MCF 10A (cell line): ENCODE measurements at regions of chr14 and their contacts with region 1.

Region 1: DNA sequence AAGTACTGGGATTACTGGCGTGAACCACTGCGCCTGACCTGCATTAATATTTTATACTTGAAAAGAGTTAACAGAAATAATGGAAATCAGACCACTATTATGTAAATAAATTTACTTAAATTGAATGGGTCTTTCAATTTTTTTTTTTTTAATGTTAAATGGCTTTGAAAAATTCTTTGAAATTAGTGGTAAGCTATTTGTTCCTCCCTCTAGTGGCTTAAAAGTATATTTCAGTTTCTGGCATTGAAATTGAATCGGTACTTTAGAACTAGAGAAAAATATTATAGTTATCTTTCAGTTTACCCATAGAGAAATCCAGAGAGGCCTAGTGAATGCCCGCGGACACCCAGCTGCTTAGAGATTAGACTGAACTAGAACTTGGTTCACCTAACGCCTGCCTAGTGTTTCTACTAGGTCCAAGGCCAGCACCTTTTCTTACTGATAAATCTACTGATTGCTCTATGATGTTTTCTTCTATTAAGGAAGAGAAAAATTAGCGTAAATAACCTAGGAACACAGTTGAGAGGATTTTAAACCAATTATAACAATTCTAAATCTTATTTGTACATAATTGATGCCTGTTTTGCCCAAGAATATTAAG is 106.5 kb downstream of the EML1 start:
- DNase-seq: peak; percentile 31
- H3K4me3 Mint-ChIP-seq: no peak overlapping the region
- H3K27ac Mint-ChIP-seq: no peak overlapping the region
- H3K4me1 Mint-ChIP-seq: no peaks in the 10 kb centered on the region
- H3K27me3 Mint-ChIP-seq: no peaks in the 10 kb centered on the region
- CTCF ChIP-seq: no peak

Region 2: GRCh38 chr14:99683619-99684355 is 215.9 kb before region 1 on chr14 and contains the start of gene CYP46A1:
- CTCF ChIA-PET with region 1: interaction called, 10 read pairs
- POLR2A ChIA-PET with region 1: interaction called, 6 read pairs
- intact Hi-C with region 1: no loop called
- DNase-seq: peak; percentile 98
- H3K4me3 Mint-ChIP-seq: peak within 1 kb of the TSS; percentile 78
- H3K27ac Mint-ChIP-seq: no peak within 1 kb of the TSS
- H3K4me1 Mint-ChIP-seq: peaks cover 6% of the 10 kb centered on the region
- H3K27me3 Mint-ChIP-seq: peaks cover 28% of the 10 kb centered on the region
- CTCF ChIP-seq: no peak
- total RNA-seq, gene CYP46A1: 0.20 and 0.30 TPM in 2 replicates

Region 3: DNA sequence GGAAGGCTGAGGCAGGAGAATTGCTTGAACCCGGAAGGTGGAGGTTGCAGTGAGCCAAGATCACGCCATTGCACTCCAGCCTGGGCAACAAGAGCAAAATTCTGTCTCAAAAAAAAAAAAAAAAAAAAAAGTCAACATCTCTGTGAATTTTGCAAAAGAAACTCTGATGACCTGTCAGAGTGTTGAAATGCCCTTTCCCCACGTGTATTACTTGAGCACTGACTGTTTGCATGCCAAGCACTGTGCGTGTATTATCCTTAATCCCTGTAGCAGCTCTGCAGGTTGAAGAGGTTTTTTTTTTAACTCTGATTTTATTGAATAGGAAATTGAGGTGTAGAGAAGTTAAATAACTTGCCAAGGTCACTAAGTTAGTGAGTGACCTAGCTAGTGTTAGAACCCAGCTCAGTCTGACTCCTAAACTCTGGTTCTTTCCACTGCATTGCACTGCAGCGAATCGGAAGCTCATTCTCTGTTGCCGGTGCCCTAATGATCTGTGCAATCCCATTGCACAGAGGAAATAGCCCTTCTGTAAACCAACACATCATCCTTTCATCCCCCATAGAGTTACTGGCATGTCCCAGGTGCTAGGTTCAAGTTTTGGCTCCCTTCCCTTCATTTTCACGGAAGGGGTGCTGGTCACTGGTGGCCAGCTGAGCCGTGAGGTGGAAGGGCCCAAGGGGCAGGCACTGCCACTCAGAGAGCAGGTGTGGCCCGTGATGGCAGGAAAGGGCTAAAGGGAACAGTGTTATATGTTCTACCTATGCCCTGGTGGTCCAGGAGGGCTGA is 15.8 kb after region 1 on chr14:
- CTCF ChIA-PET with region 1: interaction called, 12 read pairs
- POLR2A ChIA-PET with region 1: interaction called, 3 read pairs
- intact Hi-C with region 1: no loop called
- DNase-seq: no peak
- H3K4me3 Mint-ChIP-seq: no peak overlapping the region
- H3K27ac Mint-ChIP-seq: no peak overlapping the region
- H3K4me1 Mint-ChIP-seq: no peaks in the 10 kb centered on the region
- H3K27me3 Mint-ChIP-seq: no peaks in the 10 kb centered on the region
- CTCF ChIP-seq: no peak

Region 4: GRCh38 chr14:99968191-99968920 is 68.7 kb after region 1 on chr14:
- CTCF ChIA-PET with region 1: no interaction called
- POLR2A ChIA-PET with region 1: no interaction called
- intact Hi-C with region 1: no loop called
- DNase-seq: peak; percentile 27
- H3K4me3 Mint-ChIP-seq: no peak overlapping the region
- H3K27ac Mint-ChIP-seq: no peak overlapping the region
- H3K4me1 Mint-ChIP-seq: peaks cover 7% of the 10 kb centered on the region
- H3K27me3 Mint-ChIP-seq: no peaks in the 10 kb centered on the region
- CTCF ChIP-seq: no peak